RWPE1 (cell line): ENCODE measurements at regions of chr4 and their contacts with region 1.

Region 1: GRCh38 chr4:73653695-73654106 is 33.5 kb upstream of the RASSF6 start:
- DNase-seq: peak; percentile 53
- H3K27ac ChIP-seq: no peak overlapping the region
- CTCF ChIP-seq: peak; percentile 57; the same call in 1 of the 2 replicates

Region 2: GRCh38 chr4:73593631-73594241 is 60.0 kb before region 1 on chr4:
- CTCF ChIA-PET with region 1: interaction called, 11 read pairs
- POLR2A ChIA-PET with region 1: no interaction called
- DNase-seq: no peak
- H3K27ac ChIP-seq: no peak overlapping the region
- CTCF ChIP-seq: peak; percentile 64